ENCODE measurements at regions of chr2 and their contacts with region 1.

Region 1: GRCh38 chr2:36246320-36246990 is 109.1 kb upstream of the CRIM1 start:
- DNase-seq: no peak
- H3K4me3 Mint-ChIP-seq: peak overlapping the region; percentile 57
- H3K27ac Mint-ChIP-seq: peak overlapping the region; percentile 89
- H3K4me1 Mint-ChIP-seq: peaks cover 63% of the 10 kb centered on the region
- H3K27me3 Mint-ChIP-seq: peaks cover 6% of the 10 kb centered on the region

Region 2: DNA sequence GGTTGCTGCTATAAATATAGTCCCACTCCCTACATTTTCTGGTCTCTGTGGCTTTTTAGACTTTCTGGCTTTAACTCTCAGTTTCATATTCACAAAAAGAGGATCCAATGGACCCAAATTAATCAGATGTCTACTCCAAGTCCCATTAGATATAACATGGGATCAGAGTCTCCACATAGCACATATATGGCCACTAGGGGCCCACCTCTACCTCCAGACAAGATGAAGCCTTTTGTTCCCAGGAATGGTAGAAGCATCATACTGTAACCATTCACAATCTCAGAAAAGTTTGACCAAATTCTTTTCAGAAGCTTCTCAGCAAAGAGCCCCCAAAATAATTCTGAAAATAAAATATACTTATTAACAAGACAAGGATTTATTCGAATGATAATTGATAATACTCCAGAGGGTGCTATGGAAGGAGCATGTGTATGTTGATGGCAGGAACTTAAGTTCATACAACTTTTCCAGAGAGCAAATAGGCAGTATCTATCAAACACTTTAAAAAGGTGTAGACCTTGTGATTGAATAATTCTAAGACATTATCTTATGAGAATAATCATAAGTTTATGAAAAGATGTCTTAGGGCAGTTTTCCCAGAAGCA is 273.2 kb before region 1 on chr2:
- CTCF ChIA-PET with region 1: no interaction called
- POLR2A ChIA-PET with region 1: no interaction called
- intact Hi-C with region 1: loop called (anchors 5 kb)
- DNase-seq: no peak
- H3K4me3 Mint-ChIP-seq: no peak overlapping the region
- H3K27ac Mint-ChIP-seq: no peak overlapping the region
- H3K4me1 Mint-ChIP-seq: peaks cover 2% of the 10 kb centered on the region
- H3K27me3 Mint-ChIP-seq: no peaks in the 10 kb centered on the region

Region 3: GRCh38 chr2:36147670-36148390 is 98.6 kb before region 1 on chr2:
- CTCF ChIA-PET with region 1: interaction called, 5 read pairs
- POLR2A ChIA-PET with region 1: no interaction called
- intact Hi-C with region 1: loop called (anchors 1 kb)
- DNase-seq: no peak
- H3K4me3 Mint-ChIP-seq: no peak overlapping the region
- H3K27ac Mint-ChIP-seq: no peak overlapping the region
- H3K4me1 Mint-ChIP-seq: peaks cover 14% of the 10 kb centered on the region
- H3K27me3 Mint-ChIP-seq: peaks cover 16% of the 10 kb centered on the region

Region 4: GRCh38 chr2:36287363-36288275 is 41.2 kb after region 1 on chr2:
- CTCF ChIA-PET with region 1: interaction called, 3 read pairs
- POLR2A ChIA-PET with region 1: no interaction called
- intact Hi-C with region 1: loop called (anchors 2 kb)
- DNase-seq: peak; percentile 47
- H3K4me3 Mint-ChIP-seq: no peak overlapping the region
- H3K27ac Mint-ChIP-seq: no peak overlapping the region
- H3K4me1 Mint-ChIP-seq: peaks cover 8% of the 10 kb centered on the region
- H3K27me3 Mint-ChIP-seq: peaks cover 1% of the 10 kb centered on the region

Region 5: DNA sequence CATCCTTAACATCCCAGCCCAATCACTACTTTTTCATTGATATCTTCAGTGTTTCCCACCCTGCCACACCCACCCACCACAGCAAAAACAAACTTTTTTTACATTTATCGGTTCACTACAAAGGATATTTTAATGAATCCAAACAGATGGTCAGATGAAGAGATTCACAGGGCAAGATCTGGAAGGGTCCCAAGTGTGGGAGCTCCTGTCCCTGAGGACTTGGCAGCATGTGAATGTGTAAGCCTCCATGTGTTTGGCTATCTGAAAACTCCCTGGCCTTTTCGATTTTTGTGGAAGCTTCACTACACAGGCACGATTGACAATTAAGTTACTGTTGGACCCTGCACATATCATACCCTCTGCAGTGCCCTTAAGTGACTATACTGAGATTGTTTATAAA is 61.0 kb after region 1 on chr2:
- CTCF ChIA-PET with region 1: interaction called, 3 read pairs
- POLR2A ChIA-PET with region 1: no interaction called
- intact Hi-C with region 1: loop called (anchors 2 kb)
- DNase-seq: no peak
- H3K4me3 Mint-ChIP-seq: no peak overlapping the region
- H3K27ac Mint-ChIP-seq: no peak overlapping the region
- H3K4me1 Mint-ChIP-seq: peaks cover 25% of the 10 kb centered on the region
- H3K27me3 Mint-ChIP-seq: peaks cover 2% of the 10 kb centered on the region

Region 6: DNA sequence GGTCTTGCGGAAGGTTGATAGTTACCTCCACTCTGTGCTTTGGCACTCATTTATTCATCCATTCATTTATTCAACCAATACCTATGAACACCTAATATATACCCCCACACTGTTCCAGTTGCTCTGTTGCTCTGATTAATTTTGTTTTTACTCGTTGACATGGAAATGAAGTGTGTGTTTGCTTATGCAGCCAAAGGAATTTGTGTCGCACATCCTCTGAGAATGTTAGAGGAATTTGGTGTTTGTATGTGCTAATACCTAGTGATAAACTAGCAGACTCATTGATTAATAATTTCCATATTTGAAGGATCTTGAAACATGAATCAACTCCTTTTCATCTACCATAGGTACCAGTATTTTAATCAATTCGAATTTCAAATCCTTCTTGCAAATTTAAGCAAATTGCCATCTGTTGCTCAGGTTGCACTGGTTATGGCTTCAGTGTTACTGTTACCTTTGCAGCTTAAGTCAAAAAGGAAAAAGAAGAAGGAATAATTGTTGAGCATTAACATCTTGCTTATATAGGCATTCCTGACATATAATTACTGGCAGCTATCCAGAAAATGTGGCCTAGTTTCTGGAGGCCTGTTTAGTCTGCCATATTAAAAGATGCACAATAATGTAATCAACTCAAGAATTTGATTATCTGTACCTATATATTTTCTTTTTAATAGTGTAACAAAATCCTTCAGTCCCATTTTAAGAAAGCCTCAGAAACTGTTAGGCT is 83.5 kb after region 1 on chr2:
- CTCF ChIA-PET with region 1: no interaction called
- POLR2A ChIA-PET with region 1: no interaction called
- intact Hi-C with region 1: no loop called
- DNase-seq: no peak
- H3K4me3 Mint-ChIP-seq: no peak overlapping the region
- H3K27ac Mint-ChIP-seq: no peak overlapping the region
- H3K4me1 Mint-ChIP-seq: no peaks in the 10 kb centered on the region
- H3K27me3 Mint-ChIP-seq: peaks cover 2% of the 10 kb centered on the region

Region 7: GRCh38 chr2:36355151-36355889 is 108.9 kb after region 1 on chr2 and contains the start of gene CRIM1:
- CTCF ChIA-PET with region 1: interaction called, 3 read pairs
- POLR2A ChIA-PET with region 1: no interaction called
- intact Hi-C with region 1: loop called (anchors 2 kb)
- DNase-seq: peak; percentile 69
- H3K4me3 Mint-ChIP-seq: peak within 1 kb of the TSS; percentile 73
- H3K27ac Mint-ChIP-seq: no peak within 1 kb of the TSS
- H3K4me1 Mint-ChIP-seq: peaks cover 35% of the 10 kb centered on the region
- H3K27me3 Mint-ChIP-seq: peaks cover 40% of the 10 kb centered on the region
- total RNA-seq, gene CRIM1: 5.3 to 5.5 TPM